Ovary (tissue), 10 donors: ENCODE measurements at regions of chr19 and their contacts with region 1.

Region 1: DNA sequence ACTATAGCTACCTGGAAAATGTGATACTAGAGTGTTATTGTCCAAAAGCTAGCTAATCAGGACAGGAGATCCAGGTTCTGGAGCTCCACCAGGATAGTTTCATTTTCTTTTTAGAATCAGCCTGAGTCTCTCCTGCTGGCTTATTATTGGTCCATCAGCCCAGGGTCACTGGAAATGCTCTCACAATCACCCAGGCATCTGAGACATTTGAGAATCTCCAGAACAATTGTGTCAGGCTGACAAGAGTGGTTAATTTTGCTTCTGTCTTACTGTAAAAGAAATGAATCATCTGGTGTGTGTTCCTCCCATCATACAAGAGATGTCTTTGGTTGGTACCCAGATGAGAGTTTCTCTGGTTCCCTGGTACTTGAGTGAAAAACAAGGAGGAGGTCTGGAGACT is 43.6 kb upstream of the ZNF681 start:
- DNase-seq: no peak
- H3K4me3 ChIP-seq: no peak overlapping the region
- H3K27ac ChIP-seq: no peak overlapping the region
- H3K4me1 ChIP-seq: no peaks in the 10 kb centered on the region
- H3K27me3 ChIP-seq: no peaks in the 10 kb centered on the region
- CTCF ChIP-seq: no peak
- EP300 ChIP-seq: no peak
- POLR2A ChIP-seq: no peak

Region 2: GRCh38 chr19:23378948-23379347 is 423.3 kb before region 1 on chr19:
- intact Hi-C with region 1: loop called in 1 of 4 experiments (anchors 10 kb)
- DNase-seq: no peak
- H3K4me3 ChIP-seq: no peak overlapping the region
- H3K27ac ChIP-seq: no peak overlapping the region
- H3K4me1 ChIP-seq: no peaks in the 10 kb centered on the region
- H3K27me3 ChIP-seq: no peaks in the 10 kb centered on the region
- CTCF ChIP-seq: no peak
- EP300 ChIP-seq: no peak
- POLR2A ChIP-seq: no peak